ENCODE measurements at regions of chr2 and their contacts with region 1.

Region 1: DNA sequence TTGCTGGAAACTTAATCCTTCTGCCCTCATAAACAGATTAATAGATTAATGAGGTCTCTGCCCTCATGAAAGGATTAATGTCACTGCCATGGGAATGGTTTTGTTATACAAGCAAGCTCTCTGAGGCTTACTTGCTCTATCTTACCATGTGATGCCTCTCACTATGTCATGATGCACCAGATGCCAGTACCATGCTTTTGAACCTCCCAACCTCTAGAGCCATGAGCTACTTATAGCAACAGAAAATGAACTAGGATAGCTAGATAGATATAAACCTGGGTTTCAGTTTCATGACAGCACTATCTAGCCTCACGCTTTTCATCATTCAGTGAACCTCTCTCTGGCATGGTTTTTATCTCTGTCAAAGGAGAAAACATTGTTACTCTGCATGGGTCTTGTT is 371.6 kb upstream of the LRP1B start:
- DNase-seq: no peak
- H3K27ac ChIP-seq: no peak overlapping the region
- CTCF ChIP-seq: no peak

Region 2: GRCh38 chr2:141475801-141476200 is 1026.6 kb before region 1 on chr2:
- CTCF ChIA-PET with region 1: interaction called, 11 read pairs
- POLR2A ChIA-PET with region 1: no interaction called
- DNase-seq: no peak
- H3K27ac ChIP-seq: no peak overlapping the region
- CTCF ChIP-seq: no peak

Region 3: DNA sequence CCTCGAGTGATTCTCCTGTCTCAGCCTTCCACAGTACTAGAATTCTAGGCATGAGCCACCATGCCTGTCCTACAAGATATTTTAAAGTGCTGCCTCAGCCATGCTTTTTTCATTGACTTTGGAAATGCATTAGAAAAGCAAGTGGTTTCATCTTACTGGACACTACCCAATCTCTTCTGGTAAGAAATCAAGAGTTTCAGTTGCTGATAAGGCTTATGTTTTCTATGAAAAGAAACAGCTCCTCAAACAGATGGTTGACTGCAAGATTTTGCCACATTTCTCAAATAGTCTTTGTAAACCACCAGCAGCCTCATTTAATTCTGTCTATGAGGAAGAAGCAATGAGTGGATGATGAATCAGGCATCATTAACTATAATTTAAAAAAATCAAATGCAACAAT is 107.1 kb before region 1 on chr2:
- CTCF ChIA-PET with region 1: no interaction called
- POLR2A ChIA-PET with region 1: no interaction called
- DNase-seq: no peak
- H3K27ac ChIP-seq: no peak overlapping the region
- CTCF ChIP-seq: no peak

Region 4: DNA sequence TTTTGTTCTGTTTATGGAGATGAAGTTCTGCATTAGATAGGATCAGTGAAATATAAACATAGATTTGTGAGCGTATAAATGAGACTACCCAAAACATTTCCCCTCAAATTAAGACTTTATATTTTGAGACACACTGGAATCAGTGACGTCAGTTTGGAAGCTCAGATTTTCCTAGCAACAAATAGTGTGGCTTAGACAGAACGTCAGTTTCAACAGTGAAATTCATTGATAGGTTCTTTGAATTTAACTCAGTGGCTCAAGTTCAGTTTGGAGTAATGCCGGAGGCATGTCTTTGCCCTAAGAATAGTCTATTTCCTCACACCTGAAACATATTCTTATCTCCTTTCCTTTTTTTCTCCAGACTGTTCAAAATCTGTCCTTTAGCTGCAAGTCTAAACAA is 513.3 kb after region 1 on chr2:
- CTCF ChIA-PET with region 1: no interaction called
- POLR2A ChIA-PET with region 1: no interaction called
- DNase-seq: no peak
- H3K27ac ChIP-seq: no peak overlapping the region
- CTCF ChIP-seq: no peak

Measured in RWPE1 (cell line).